Right ventricle myocardium inferior (tissue), 1 donor: ENCODE measurements at regions of chr5 and their contacts with region 1.

Region 1: DNA sequence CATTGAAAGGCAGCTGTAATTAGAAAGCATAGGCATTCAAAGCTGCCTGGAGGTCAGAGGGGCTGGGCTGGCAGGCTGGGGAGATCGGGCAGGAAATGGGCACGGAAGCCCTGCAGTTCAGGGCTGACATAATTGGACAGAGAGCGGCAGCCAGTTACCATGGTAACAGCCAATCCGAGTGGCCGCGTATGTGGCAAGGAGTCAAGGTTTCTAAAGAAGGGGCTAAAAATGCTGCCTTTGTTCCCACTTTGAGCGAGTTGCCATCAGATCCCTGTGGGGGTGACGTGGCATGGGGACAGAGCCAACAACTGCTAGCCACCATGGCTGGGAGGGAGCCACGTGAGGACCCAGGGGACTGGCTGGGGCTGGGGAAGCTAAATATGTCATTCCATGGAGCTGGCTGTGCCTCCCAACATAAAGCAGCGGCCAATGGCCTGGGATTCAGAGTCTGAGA is 44.7 kb upstream of the NDFIP1 start:
- DNase-seq: peak; percentile 84
- ATAC-seq: peak; percentile 86

Region 2: DNA sequence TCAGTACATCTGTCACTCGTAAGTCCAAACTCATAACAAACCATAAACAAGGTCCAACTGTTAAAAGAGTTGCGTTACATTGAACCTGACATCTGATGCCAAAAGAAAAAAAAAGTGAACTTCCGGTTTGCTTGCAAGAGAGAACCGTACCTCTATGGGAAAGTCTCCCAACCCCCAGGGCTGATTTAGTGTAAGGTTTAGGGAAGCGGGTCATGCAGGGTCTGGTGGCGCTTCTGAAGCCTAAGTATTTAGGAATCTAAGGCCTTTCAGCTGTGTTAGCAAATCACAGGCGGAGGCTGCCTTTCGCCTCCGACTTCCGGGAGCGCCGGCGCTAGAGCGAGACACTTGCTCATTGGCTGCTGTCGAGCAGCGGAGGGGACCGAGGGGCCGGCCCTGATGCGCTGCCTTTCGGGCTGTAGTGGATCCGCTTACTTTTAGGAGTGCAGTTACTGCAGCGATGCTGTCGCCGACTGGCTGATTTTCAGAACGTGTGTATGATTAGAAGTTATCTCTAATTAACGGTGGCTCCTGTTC is 39.1 kb before region 1 on chr5:
- intact Hi-C with region 1: loop called (anchors 5 kb)
- DNase-seq: peak; percentile 94
- ATAC-seq: peak; percentile 99

Region 3: GRCh38 chr5:142108432-142109330 is 44.8 kb after region 1 on chr5 and contains the start of gene NDFIP1:
- intact Hi-C with region 1: loop called (anchors 2 kb)
- DNase-seq: peak; percentile 95
- ATAC-seq: peak; percentile 98
- total RNA-seq, gene NDFIP1: 51.9 TPM